Mammary epithelial cell (primary cell): ENCODE measurements at regions of chr7 and their contacts with region 1.

Region 1: GRCh38 chr7:70693686-70694360 is 438.1 kb upstream of the GALNT17 start:
- DNase-seq: peak; percentile 58
- H3K4me3 ChIP-seq: peak overlapping the region; percentile 48 to 93 (median 85)
- H3K27ac ChIP-seq: peak overlapping the region; percentile 20
- H3K4me1 ChIP-seq: peaks cover 3% of the 10 kb centered on the region
- H3K27me3 ChIP-seq: no peaks in the 10 kb centered on the region
- CTCF ChIP-seq: no peak

Region 2: DNA sequence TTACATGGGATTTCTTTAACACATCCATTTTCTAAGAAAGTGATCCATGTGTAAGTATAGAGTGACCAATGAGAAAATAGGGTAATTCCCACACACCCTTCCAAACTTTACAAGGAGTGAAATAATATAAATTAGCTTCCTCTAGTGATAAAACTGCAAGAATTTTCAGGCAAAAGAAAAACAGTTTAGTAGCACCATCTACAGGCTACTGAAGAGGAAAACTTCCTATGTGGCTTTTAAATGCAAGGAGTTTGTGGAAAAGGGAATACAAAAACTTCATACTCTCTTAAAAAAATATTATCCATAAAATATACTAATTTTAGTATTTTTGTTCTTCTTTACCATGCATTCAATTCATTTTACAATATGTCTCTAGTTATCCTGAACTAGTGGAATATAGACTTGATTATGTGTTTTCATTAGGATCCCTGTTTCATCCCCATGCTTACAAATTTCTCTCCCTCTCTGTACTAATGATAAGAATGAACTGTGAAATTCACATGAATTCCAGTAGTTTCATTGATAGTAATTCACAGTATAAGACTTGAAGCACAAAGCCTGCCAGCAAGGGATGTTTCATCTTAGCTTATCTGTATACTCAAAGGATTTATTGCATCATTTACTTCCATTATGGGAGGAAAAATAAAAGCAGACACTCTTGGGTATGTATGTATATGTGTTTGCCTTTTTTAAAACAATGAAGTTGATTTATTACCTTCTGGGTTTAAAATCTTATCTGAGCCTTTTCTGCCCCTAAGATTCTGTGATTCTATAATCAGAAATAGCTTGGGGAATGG is 652.7 kb before region 1 on chr7:
- CTCF ChIA-PET with region 1: interaction called, 4 read pairs
- dilution Hi-C with region 1: no loop called
- in situ Hi-C with region 1: no loop called
- intact Hi-C with region 1: loop called (anchors 1 kb)
- DNase-seq: no peak
- H3K4me3 ChIP-seq: no peak overlapping the region
- H3K27ac ChIP-seq: no peak overlapping the region
- H3K4me1 ChIP-seq: no peaks in the 10 kb centered on the region
- H3K27me3 ChIP-seq: no peaks in the 10 kb centered on the region
- CTCF ChIP-seq: no peak

Region 3: GRCh38 chr7:70193514-70193913 is 500.3 kb before region 1 on chr7:
- CTCF ChIA-PET with region 1: no interaction called
- dilution Hi-C with region 1: no loop called
- in situ Hi-C with region 1: loop called (anchors 10 to 25 kb)
- intact Hi-C with region 1: no loop called
- DNase-seq: peak; percentile 14
- H3K4me3 ChIP-seq: no peak overlapping the region
- H3K27ac ChIP-seq: no peak overlapping the region
- H3K4me1 ChIP-seq: no peaks in the 10 kb centered on the region
- H3K27me3 ChIP-seq: no peaks in the 10 kb centered on the region
- CTCF ChIP-seq: peak; percentile 29 to 51

Region 4: GRCh38 chr7:70426249-70426880 is 267.5 kb before region 1 on chr7:
- CTCF ChIA-PET with region 1: no interaction called
- dilution Hi-C with region 1: no loop called
- in situ Hi-C with region 1: no loop called
- intact Hi-C with region 1: loop called (anchors 5 kb)
- DNase-seq: no peak
- H3K4me3 ChIP-seq: no peak overlapping the region
- H3K27ac ChIP-seq: no peak overlapping the region
- H3K4me1 ChIP-seq: no peaks in the 10 kb centered on the region
- H3K27me3 ChIP-seq: no peaks in the 10 kb centered on the region
- CTCF ChIP-seq: no peak

Region 5: DNA sequence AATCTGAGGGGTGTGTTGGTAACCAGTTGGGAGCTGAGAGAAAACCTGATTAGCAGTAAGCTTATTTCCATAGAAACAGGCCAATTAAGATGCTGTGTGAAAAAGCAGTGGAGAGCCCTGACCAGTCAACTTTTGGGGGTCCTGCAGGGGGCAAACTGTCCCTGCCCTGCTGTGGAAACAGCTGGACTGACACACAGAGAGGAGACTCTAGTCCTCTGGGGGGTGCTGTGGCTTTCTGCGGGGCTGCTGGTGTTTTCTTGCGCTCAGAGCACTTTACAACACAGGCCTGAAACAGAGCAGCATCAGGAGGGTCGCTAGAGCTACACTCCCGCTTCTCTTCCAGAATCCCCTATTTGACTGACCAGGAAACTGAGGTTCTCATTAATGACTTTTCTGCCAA is 108.8 kb before region 1 on chr7:
- CTCF ChIA-PET with region 1: interaction called, 8 read pairs
- dilution Hi-C with region 1: no loop called
- in situ Hi-C with region 1: loop called (anchors 10 to 25 kb)
- intact Hi-C with region 1: loop called (anchors 1 kb)
- DNase-seq: no peak
- H3K4me3 ChIP-seq: no peak overlapping the region
- H3K27ac ChIP-seq: no peak overlapping the region
- H3K4me1 ChIP-seq: no peaks in the 10 kb centered on the region
- H3K27me3 ChIP-seq: no peaks in the 10 kb centered on the region
- CTCF ChIP-seq: peak; percentile 7 to 52